Lower leg skin (tissue), 4 donors: ENCODE measurements at regions of chr13 and their contacts with region 1.

Region 1: DNA sequence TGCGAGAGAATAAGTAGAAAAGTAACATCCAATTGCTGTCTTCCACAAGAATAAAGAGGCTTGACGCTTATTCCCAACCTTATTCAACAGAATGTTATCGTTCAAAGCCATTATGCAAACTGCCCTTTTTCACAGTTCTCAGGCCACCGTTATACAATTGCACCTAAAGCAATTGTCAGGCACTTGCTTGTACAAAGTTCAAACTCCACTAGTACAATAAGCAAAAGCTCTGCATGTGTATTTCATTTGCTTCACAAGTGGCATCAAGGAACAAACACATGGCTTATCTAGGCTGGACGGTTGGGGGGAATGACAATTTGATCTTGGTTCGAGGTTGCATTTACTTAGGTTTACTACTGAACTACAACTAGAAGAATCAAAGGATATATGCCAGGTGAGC is 815.6 kb downstream of the EFNB2 start:
- DNase-seq: no peak
- H3K4me3 ChIP-seq: no peak overlapping the region
- CTCF ChIP-seq: no peak
- POLR2A ChIP-seq: no peak

Region 2: DNA sequence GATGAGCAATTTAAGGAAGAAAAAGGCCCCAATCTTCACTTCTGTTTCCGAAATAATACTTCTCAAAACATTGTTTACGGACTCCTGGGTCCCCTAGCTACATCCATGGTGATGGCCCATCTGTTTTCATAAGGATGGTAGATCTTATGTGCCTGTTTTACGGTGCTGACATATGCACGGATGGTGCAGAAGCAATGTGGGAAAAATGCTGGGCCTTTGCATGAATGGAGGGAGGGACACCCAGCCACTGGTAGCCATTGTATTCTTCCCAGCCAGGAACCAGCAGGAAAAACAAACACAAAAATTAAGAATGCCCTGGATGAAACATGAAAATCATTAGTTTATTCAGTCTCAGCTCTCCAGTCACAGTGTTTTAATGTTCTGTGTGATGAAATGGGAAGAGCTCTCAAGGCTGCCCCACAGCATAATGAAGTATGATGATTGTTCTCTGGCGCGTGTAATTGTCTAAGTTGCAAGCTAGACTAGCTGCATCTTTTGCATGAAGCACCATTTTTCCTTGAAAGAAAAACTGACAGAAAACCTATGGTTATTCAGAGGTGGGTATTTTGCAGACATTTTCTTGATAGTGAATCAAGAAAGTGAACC is 1452.5 kb before region 1 on chr13:
- intact Hi-C with region 1: loop called (anchors 5 kb)
- DNase-seq: no peak
- H3K4me3 ChIP-seq: no peak overlapping the region
- CTCF ChIP-seq: no peak
- POLR2A ChIP-seq: no peak

Region 3: DNA sequence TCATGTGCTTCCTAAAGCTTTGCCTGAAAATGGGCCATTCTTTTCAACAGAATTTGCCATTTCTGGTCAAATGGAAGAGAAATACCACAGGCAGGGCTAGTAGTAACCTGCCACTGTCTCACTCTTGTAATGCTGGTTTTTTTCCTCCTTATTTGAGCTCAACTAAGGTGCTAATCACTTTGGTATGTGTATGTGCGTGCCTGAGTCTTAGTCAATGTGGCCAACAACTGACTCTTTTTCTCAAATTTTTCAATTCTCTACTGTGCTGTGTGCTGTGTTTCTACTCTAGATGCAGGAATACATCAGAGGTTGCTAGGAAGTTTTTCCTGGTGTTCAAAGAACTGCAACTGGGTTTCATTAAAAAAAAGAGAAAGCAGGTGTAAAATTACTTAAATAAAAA is 54.6 kb before region 1 on chr13:
- intact Hi-C with region 1: no loop called
- DNase-seq: no peak
- H3K4me3 ChIP-seq: no peak overlapping the region
- CTCF ChIP-seq: no peak
- POLR2A ChIP-seq: no peak